ENCODE measurements at regions of chr2 and their contacts with region 1.

Region 1: GRCh38 chr2:86610871-86611270 is 12.8 kb downstream of the RNF103 start:
- DNase-seq: no peak
- ATAC-seq: no peak
- H3K4me3 ChIP-seq: no peak overlapping the region
- H3K27ac ChIP-seq: no peak overlapping the region
- H3K4me1 ChIP-seq: no peaks in the 10 kb centered on the region
- H3K27me3 ChIP-seq: no peaks in the 10 kb centered on the region
- CTCF ChIP-seq: no peak
- EP300 ChIP-seq: no peak
- POLR2A ChIP-seq: no peak
- RAD21 ChIP-seq: no peak

Region 2: GRCh38 chr2:86383844-86384243 is 227.0 kb before region 1 on chr2:
- CTCF ChIA-PET with region 1: no interaction called
- POLR2A ChIA-PET with region 1: no interaction called
- RAD21 ChIA-PET with region 1: no interaction called
- SMC1A ChIA-PET with region 1: no interaction called
- in situ Hi-C with region 1: no loop called
- intact Hi-C with region 1: no loop called
- DNase-seq: no peak
- ATAC-seq: no peak
- H3K4me3 ChIP-seq: no peak overlapping the region
- H3K27ac ChIP-seq: no peak overlapping the region
- H3K4me1 ChIP-seq: no peaks in the 10 kb centered on the region
- H3K27me3 ChIP-seq: no peaks in the 10 kb centered on the region
- CTCF ChIP-seq: no peak
- EP300 ChIP-seq: no peak
- POLR2A ChIP-seq: no peak
- RAD21 ChIP-seq: no peak

Region 3: GRCh38 chr2:86570059-86570458 is 40.8 kb before region 1 on chr2:
- CTCF ChIA-PET with region 1: no interaction called
- POLR2A ChIA-PET with region 1: interaction called, 5 read pairs
- RAD21 ChIA-PET with region 1: no interaction called
- SMC1A ChIA-PET with region 1: no interaction called
- in situ Hi-C with region 1: no loop called
- intact Hi-C with region 1: loop called (anchors 5 kb)
- DNase-seq: no peak
- ATAC-seq: no peak
- H3K4me3 ChIP-seq: no peak overlapping the region
- H3K27ac ChIP-seq: no peak overlapping the region
- H3K4me1 ChIP-seq: no peaks in the 10 kb centered on the region
- H3K27me3 ChIP-seq: no peaks in the 10 kb centered on the region
- CTCF ChIP-seq: no peak
- EP300 ChIP-seq: no peak
- POLR2A ChIP-seq: no peak
- RAD21 ChIP-seq: no peak

Measured in GM12878 (cell line).